Right ventricle myocardium inferior (tissue), 1 donor: ENCODE measurements at regions of chr18 and their contacts with region 1.

Region 1: GRCh38 chr18:34729264-34729663 is 19.2 kb downstream of the DTNA start:
- DNase-seq: no peak
- ATAC-seq: peak; percentile 49

Region 2: DNA sequence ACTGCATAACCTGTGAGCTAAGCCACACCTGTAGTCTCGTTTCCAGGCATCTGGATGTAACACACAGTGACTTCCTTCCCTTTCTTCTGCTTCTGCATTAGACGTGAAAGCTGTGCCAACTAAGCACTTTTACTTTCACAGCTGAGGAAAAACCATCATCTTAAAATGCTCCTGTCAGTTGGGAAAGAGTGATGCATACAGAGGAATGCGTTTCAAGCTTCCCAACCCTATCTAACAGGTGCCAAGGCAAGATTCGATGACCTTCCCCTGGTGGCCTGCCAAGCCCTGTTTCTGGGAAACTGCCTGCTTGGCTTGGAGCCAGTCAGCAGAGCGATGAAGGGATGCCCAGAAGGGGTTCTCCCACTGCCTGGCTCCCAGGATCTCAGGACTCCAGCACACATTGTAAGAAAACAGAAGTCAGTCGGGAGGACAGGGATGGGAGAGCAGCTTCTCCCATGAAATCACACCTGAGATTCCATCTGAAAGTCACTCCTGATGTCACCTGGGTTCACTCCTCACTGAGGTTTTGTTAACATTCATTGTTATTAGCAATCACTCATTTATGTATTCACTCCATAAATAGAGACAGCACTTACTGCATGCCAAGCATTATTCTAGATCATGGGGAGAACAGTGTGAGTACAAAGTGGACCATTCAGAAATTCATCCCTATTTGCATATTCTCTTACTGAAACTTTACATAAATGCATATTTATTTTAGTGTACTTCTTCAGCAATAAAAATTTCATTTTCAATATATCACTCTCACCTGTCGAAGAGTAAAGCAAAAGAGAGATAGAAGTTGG is 44.9 kb after region 1 on chr18:
- intact Hi-C with region 1: loop called (anchors 5 kb)
- DNase-seq: no peak
- ATAC-seq: peak; percentile 68